HepG2 (cell line): ENCODE measurements at regions of chr16 and their contacts with region 1.

Region 1: DNA sequence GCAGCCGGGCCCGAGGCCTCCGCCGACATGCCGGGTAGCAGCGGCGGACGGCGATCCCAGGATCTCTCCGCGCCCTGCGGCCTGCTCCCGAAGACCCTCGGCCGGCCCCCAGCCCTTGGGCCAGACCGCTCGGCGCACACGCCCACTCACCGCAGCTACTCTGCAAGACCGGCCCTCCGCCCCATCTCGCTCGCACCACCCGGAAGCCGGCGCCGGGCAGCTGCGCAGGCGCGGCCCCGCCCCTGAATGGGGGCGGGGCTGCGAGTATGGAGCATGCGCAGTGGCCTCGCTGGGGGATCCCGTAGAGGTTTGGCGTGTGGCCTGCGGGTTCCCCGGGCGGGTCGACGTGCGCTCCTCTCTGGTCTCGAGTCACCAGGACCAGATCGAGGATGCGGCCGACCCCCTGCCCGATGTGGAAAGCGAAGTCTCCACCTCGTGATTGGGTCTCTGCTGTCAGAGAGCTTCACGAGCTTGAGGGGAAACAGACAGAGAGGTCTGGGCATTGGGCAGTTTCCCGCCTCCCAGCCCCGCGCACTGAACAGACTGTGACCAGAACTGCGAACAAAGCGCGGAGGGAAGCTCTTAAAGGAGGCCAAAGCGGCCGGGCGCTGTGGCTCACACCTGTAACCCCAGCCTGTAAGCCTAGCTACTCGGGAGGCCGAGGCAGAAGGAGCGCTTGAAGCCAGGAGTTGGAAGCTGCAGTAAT is at the start of gene KCTD13:
- DNase-seq: peak; percentile 82
- ATAC-seq: peak; percentile 96
- H3K4me3 ChIP-seq: peak within 1 kb of the TSS; percentile 80 to 96 (median 87)
- H3K27ac ChIP-seq: peak within 1 kb of the TSS; percentile 77
- H3K4me1 ChIP-seq: peaks cover 31% of the 10 kb centered on the region
- H3K27me3 ChIP-seq: no peaks in the 10 kb centered on the region
- CTCF ChIP-seq: no peak; the same call in 1 of the 2 replicates
- EP300 ChIP-seq: no peak
- POLR2A ChIP-seq: peak; percentile 79 to 99
- RAD21 ChIP-seq: peak; percentile 55
- total RNA-seq, gene KCTD13: 3.9 and 6.3 TPM in 2 replicates

Region 2: DNA sequence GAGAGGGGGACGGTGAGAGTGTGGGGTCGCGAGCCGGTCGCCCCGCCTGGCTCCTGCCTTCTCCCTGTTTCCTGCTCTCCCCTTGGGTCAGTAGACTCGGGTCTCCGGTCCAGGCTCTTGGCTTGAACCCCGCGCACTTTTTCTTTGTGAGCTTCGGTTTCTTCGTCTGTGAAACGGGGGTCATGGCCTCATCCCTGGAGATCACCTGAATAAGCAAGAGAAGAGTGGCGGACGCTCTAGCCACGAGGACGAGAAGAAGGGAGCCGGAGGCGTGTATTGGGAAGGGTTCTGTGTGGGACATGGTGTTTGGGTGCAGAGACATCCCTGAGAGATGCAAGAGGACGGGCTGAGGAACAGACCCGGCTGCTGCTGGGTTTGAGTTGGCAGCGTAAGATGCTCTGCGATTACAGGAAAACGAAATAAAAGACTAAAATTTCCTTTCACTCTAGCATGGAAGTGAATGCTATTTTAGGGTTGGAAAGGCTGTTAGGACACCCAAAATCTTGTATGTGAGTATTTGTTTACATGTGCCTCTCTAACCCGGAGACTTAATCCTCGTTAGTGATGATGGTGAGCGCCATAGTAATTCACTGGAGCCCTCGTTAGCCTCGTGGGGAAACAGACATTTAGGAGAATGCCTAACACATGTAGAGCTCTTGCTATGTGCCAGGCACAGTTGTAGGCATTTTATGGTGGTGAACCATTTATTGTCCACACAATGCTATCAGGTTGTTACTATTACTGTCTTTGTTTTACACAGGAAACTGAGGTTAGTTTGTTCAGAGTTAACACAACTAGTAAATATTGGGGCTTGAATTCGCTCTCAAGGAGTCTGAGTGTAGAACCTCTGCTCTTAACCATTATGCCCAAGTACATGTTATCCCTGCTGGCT is 135.0 kb before region 1 on chr16:
- CTCF ChIA-PET with region 1: no interaction called
- POLR2A ChIA-PET with region 1: no interaction called
- in situ Hi-C with region 1: no loop called
- intact Hi-C with region 1: no loop called
- DNase-seq: no peak
- ATAC-seq: peak; percentile 45
- H3K4me3 ChIP-seq: peak overlapping the region; percentile 77 to 97 (median 84)
- H3K27ac ChIP-seq: peak overlapping the region; percentile 60
- H3K4me1 ChIP-seq: peaks cover 59% of the 10 kb centered on the region
- H3K27me3 ChIP-seq: no peaks in the 10 kb centered on the region; a peak in 1 of 5 replicates
- CTCF ChIP-seq: 0 out of 2 replicates have a peak, but pooled peaks have one; percentile 6
- EP300 ChIP-seq: no peak
- POLR2A ChIP-seq: no peak
- RAD21 ChIP-seq: no peak

Region 3: DNA sequence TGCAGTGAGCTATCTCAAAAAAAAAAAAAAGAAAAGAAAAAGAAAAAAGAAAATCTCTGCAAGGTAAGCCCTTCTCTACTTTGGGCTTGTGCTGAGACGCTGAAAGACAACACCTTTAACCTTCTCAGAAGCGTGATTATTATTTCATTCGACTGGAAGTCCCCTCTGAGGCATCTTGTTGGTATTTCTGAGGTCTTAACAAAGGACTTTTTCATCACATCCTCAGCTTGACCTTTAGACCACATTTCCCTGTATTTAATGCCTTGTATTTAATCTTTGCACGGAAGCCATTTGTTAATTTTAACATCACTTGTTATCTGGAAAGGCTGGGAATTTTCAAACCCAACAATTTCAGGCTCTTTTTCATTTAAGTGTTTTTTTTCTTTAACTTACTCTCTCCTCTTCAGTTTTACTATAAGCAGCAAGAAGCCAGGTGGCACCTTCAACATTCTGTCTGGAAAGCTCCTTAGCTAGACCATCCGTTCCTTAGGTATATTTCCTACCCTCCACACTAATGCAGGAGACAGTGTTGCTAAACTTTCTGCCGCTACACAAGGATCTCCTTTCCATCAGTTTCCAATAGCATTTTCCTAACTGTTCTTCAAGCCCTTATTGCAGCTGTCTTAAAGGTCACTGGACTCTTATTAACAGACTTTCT is 10.4 kb before region 1 on chr16:
- CTCF ChIA-PET with region 1: no interaction called
- POLR2A ChIA-PET with region 1: interaction called, 34 read pairs
- in situ Hi-C with region 1: no loop called
- intact Hi-C with region 1: no loop called
- DNase-seq: peak; percentile 63
- ATAC-seq: no peak
- H3K4me3 ChIP-seq: no peak overlapping the region
- H3K27ac ChIP-seq: peak overlapping the region; percentile 55
- H3K4me1 ChIP-seq: peaks cover 14% of the 10 kb centered on the region
- H3K27me3 ChIP-seq: no peaks in the 10 kb centered on the region
- CTCF ChIP-seq: no peak
- EP300 ChIP-seq: no peak
- POLR2A ChIP-seq: no peak
- RAD21 ChIP-seq: no peak

Region 4: DNA sequence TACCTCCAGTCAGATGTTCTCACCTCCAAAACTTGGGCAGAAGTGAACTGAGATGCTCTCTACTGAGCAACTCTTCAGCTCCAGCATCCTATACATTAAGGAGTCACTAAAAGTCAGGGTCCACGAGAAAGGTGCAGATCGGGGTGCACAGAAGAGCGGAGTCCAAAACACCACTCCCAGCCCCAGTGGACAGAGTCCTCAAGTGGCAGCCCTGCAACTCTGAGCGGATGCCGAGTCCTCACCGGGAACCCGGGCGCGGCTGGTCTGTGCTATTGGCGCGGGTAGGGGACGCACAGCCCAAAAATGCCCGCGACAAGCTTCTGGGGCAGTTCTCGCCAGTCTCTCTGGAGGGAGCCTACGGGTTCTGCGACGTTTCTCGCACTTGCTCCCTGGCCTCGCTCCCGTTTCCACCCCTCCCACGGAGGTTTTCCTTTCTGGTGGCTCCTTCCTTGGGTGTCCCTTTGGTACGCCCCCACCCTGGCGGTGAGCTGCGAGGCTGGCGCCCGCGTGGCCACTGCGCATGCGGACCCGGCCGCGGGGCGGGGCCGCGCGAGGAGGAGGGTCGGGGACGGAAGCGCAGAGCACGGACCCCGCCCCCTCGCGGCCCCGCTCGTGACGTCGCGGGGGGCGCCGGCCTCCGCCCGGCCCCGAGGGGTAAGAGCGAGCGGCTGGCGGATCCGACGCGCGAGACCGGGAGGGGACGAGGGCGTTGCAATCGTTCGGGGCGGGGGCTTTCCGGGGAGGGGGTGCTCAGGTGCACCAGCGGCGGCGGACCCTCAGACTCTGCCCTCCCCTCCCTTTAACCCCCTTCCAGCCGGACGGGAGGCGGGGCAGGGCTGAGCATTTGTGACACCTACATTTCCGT is 35.6 kb after region 1 on chr16 and contains the start of gene TMEM219:
- CTCF ChIA-PET with region 1: no interaction called
- POLR2A ChIA-PET with region 1: interaction called, 43 read pairs
- in situ Hi-C with region 1: loop called (anchors 5 kb)
- intact Hi-C with region 1: loop called (anchors 5 kb)
- DNase-seq: peak; percentile 81
- ATAC-seq: peak; percentile 78
- H3K4me3 ChIP-seq: peak within 1 kb of the TSS; percentile 65 to 87 (median 80)
- H3K27ac ChIP-seq: peak within 1 kb of the TSS; percentile 81
- H3K4me1 ChIP-seq: peaks cover 56% of the 10 kb centered on the region
- H3K27me3 ChIP-seq: no peaks in the 10 kb centered on the region; a peak in 1 of 5 replicates
- CTCF ChIP-seq: no peak; the same call in 1 of the 2 replicates
- EP300 ChIP-seq: no peak
- POLR2A ChIP-seq: peak; percentile 70 to 89
- RAD21 ChIP-seq: peak; percentile 71
- total RNA-seq, gene TMEM219: 64.5 and 105 TPM in 2 replicates

Region 5: GRCh38 chr16:29995911-29996772 is 70.0 kb after region 1 on chr16 and contains the start of gene INO80E:
- CTCF ChIA-PET with region 1: no interaction called
- POLR2A ChIA-PET with region 1: interaction called, 10 read pairs
- in situ Hi-C with region 1: no loop called
- intact Hi-C with region 1: no loop called
- DNase-seq: peak; percentile 94
- ATAC-seq: peak; percentile 96
- H3K4me3 ChIP-seq: peak within 1 kb of the TSS; percentile 92 to 95 (median 94)
- H3K27ac ChIP-seq: peak within 1 kb of the TSS; percentile 87
- H3K4me1 ChIP-seq: peaks cover 24% of the 10 kb centered on the region
- H3K27me3 ChIP-seq: peaks cover 0 to 5% of the 10 kb centered on the region in 2 experiments; a peak in 1 of 5 replicates
- CTCF ChIP-seq: peak; percentile 45; the same call in 1 of the 2 replicates
- EP300 ChIP-seq: no peak
- POLR2A ChIP-seq: peak; percentile 79 to 82
- RAD21 ChIP-seq: peak; percentile 44; the same call in 1 of the 2 replicates
- total RNA-seq, gene INO80E: 39.5 and 45.6 TPM in 2 replicates